ENCODE measurements at regions of chr2 and their contacts with region 1.

Region 1: GRCh38 chr2:231411831-231412617 is 16.5 kb downstream of the B3GNT7 start:
- DNase-seq: peak; percentile 84
- ATAC-seq: peak; percentile 99
- H3K4me3 Mint-ChIP-seq: peak overlapping the region; percentile 20
- H3K27ac Mint-ChIP-seq: no peak overlapping the region
- H3K4me1 Mint-ChIP-seq: peaks cover 8% of the 10 kb centered on the region
- H3K27me3 Mint-ChIP-seq: peaks cover 42% of the 10 kb centered on the region

Region 2: DNA sequence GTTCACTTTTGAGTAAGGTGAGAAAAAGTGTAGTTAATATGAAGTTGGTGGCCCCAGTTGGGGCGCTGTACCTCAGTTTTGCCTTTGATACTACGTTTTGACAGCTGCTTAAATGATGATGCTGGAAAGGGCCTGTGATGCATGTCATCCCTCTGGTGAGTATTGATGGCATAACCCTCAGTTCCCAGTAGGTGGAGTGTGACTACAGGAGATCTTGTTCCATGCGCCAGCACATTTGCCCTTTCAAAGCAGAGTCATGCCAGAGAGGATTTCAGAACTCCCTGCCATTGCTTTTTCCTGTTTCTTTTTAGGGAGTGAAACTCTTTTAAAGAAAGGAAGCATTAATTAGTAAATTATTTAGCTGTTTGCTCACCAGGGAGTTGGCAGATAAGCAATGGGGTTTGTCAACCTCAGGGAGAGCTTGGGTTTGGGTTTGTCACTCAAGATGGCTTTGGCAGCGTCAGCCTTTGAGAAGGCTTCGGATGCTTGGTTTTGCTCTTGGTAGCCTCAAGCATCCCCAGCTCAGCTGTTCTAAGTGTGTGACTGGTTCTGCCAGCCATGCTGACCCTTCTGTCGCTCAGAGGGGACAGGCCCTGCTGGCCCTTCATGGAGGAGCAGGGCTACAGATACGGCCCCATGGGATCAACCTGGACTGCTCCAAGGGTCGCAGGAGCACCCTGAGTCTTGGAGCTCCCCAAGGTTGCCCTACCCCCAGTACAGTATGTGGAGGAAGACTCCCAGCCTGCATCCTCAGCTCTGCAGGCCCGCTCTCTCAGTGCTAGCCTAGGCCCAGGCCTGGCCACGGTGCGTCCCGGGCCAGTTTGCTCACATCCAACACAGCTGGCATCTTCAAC is 184.5 kb before region 1 on chr2:
- CTCF ChIA-PET with region 1: interaction called, 35 read pairs
- DNase-seq: peak; percentile 69
- ATAC-seq: peak; percentile 96
- H3K4me3 Mint-ChIP-seq: no peak overlapping the region
- H3K27ac Mint-ChIP-seq: no peak overlapping the region
- H3K4me1 Mint-ChIP-seq: no peaks in the 10 kb centered on the region
- H3K27me3 Mint-ChIP-seq: no peaks in the 10 kb centered on the region

Region 3: DNA sequence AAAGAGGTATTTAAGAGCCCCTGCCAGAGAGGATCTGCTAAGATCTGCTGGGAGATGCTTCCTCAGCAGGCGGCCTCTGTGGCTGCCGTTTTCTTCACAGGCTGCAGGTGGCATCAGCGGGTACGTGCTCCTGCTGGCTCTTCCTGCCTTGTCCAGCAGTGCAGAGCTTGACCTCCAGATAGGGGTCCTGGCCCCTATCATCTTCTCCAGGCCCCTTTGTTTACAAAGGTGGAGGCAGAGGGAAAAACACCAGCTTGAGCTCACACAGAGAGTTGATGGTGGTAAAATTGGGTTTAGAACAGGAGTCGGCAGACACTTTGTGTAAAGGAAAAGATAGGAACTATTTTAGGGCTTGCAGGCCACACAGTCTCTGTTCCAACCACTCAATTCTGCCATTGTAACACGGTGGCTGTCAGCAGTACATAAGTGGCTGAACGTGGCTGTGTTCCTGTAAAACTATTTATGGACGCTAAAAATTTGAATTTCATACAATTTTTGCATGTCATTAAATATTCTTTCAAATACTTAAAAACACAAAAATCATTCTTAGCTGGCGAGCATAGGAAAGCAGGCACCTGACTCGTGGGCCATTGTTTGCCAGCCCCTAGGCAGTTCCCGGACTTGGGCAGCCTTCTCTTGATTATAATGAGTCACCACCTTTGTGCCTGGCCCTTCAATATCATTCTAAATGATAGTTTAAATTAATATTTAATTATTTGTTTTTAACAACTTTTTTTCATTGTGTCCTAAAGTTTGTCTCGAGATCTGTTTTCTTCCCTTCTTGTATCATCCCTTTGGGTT is 114.7 kb before region 1 on chr2:
- CTCF ChIA-PET with region 1: interaction called, 19 read pairs
- DNase-seq: peak; percentile 49
- ATAC-seq: peak; percentile 53
- H3K4me3 Mint-ChIP-seq: no peak overlapping the region
- H3K27ac Mint-ChIP-seq: no peak overlapping the region
- H3K4me1 Mint-ChIP-seq: peaks cover 4% of the 10 kb centered on the region
- H3K27me3 Mint-ChIP-seq: no peaks in the 10 kb centered on the region

Region 4: DNA sequence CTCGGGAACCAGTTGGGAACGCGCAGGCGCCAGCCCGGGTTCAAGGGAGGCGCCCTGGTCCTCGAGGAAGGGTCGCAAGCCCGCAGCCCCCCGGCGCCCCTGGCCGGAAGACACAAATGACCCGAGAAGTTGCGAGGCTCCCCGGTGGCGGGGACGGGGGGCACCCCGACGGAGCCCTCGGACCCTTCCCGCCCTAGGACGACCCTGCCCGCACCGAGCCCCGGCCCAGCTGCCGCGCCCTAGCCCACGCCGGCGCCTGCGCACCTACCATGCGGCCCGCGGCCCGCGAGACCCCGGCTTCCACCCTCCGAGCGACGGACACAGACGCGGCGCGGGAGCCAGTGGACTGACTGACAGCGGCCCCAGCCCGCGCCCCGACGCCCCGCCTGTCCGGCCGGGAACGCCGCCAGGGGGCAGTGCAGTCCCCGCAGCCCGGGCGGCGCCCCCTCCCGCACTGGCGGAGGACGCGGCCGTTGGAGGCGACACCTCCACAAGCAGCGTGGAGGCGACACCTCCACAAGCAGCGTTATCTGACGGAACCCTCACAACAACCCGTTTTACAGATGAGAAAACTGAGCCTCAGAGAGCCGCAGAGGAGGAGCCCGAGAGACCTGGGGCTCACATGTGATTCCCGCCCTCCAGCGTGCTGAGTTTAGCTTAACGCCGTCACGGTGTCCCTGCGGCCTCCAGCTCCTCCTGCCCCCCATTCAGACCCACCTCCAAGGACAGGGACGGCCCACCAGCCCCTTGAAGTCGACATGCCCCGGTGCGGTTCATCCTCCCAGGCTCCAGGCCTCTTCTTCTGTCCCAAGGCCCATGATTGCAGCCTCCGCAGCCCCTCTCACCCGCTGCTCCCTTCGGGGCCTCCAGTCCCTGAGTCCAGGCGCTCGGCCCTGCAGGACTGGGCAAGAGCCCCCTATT is 118.3 kb after region 1 on chr2 and contains the start of gene NMUR1:
- CTCF ChIA-PET with region 1: no interaction called
- DNase-seq: peak; percentile 82
- ATAC-seq: peak; percentile 94
- H3K4me3 Mint-ChIP-seq: peak within 1 kb of the TSS; percentile 70
- H3K27ac Mint-ChIP-seq: peak within 1 kb of the TSS; percentile 60
- H3K4me1 Mint-ChIP-seq: peaks cover 51% of the 10 kb centered on the region
- H3K27me3 Mint-ChIP-seq: peaks cover 40% of the 10 kb centered on the region
- total RNA-seq, gene NMUR1: 3.6 to 8.6 TPM

Measured in activated CD8-positive, alpha-beta memory T cell treated with anti-CD3 and anti-CD28 coated beads, Interleukin-2, amount 10 ng/mL, durations not matched to agents 7 days and 5 days (primary cell).